AG04449 (cell line): ENCODE measurements at regions of chr5 and their contacts with region 1.

Region 1: GRCh38 chr5:103258368-103258956 is at the start of gene MACIR:
- DNase-seq: peak; percentile 89
- H3K4me3 ChIP-seq: peak within 1 kb of the TSS; percentile 92
- CTCF ChIP-seq: no peak

Region 2: DNA sequence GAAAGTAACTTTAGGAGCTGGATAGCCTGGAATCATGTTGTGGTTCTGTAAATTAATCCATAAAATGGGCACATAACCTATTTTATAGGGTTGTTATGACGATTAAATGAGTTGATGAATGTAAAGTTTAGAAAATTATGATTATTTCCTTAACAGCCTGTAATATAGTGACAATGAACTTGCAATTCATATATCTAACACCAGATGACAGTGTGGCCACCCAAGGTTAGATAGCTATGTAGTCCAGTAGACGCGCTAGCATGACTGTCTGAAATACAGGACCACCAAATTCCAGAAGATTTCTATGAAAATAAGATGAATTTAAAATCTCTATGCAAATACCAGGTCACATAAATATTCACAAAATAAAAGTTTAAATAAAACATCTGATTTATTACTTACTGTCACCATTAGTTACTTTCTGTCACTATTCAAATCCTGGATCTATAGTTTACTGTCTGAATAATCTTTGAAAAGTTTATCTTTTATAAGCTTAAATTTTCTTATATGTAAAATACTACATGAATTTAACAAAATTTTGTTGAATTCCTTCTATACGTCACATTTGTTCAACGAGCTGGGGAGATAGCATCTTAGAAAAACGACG is 26.0 kb before region 1 on chr5:
- CTCF ChIA-PET with region 1: interaction called, 29 read pairs
- POLR2A ChIA-PET with region 1: no interaction called
- DNase-seq: no peak
- H3K4me3 ChIP-seq: no peak overlapping the region
- CTCF ChIP-seq: peak; percentile 38

Region 3: DNA sequence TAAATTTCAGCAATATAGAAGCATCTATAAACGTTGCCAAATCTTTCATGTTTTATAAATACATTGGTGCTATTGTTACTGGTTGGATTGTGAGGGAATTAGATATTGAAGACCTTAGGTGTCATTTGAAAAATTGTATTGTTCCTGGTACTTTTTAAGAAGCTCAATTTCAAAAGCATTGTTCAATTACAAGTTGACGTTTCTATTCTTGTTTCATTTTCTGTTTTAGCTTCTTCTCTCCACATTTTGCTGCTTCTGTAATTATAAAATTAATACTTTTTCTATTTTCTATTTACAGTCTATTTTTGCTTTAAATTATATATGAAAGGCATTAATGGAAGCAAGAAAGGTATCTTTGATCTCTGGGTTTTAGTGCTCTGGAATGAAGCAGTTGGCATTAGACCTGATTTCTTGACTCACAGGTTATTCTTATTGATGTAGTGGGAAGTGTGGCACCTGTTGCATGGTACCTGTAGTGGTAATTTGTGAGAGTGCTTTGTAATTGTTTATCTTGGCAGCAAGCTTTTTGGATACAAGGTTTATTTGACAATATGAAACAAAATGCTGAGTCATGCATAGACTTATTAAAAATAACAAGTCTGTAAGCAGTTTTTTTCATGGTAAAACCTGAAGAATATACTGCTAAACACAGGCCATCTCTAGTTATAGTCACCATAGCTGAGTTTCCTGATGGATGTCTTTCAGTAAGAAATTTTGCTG is 13.3 kb after region 1 on chr5:
- CTCF ChIA-PET with region 1: interaction called, 11 read pairs
- POLR2A ChIA-PET with region 1: interaction called, 5 read pairs
- DNase-seq: no peak
- H3K4me3 ChIP-seq: no peak overlapping the region
- CTCF ChIP-seq: no peak

Region 4: DNA sequence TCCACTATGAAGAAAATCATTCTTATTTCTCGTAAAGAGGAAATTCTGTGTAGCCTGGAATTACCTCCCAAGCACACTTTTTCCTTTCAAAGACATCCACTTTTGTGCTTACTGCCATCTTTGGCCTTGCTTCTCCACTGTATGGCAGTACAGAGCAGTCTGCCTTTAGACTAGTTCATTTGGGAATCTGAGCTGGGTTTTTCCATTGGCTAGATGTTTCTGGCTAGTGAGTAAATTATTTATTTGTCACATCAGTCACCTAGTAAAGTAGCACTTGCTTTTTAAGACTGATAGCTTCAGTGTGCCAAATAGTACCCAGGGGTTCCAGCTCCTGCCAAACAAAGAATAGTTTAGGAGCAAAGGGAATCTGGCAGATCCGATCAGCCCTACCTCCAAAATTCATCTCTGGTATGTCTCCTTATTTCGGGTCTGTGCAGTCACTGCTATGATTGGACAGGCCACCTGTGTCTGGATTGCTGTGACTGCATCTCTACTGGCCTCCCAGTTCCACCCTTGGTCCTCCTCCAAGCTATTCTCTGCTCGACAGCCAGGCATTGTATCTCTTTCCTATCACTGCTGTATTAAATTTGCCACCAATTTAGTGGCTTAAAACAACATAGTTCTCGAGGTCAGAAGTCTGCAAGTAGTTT is 206.5 kb after region 1 on chr5:
- CTCF ChIA-PET with region 1: interaction called, 6 read pairs
- POLR2A ChIA-PET with region 1: interaction called, 15 read pairs
- DNase-seq: no peak
- H3K4me3 ChIP-seq: no peak overlapping the region
- CTCF ChIP-seq: no peak